Activated CD4-positive, alpha-beta memory T cell treated with anti-CD3 and anti-CD28 coated beads for 36 hours (primary cell): ENCODE measurements at regions of chr19 and their contacts with region 1.

Region 1: GRCh38 chr19:19488875-19489690 is 26.3 kb downstream of the TSSK6 start:
- DNase-seq: peak; percentile 97
- H3K4me3 Mint-ChIP-seq: peak overlapping the region; percentile 57
- H3K27ac Mint-ChIP-seq: peak overlapping the region; percentile 95
- H3K4me1 Mint-ChIP-seq: peaks cover 51% of the 10 kb centered on the region
- H3K27me3 Mint-ChIP-seq: no peaks in the 10 kb centered on the region

Region 2: GRCh38 chr19:19256072-19256969 is 232.8 kb before region 1 on chr19:
- CTCF ChIA-PET with region 1: no interaction called
- POLR2A ChIA-PET with region 1: no interaction called
- intact Hi-C with region 1: no loop called
- DNase-seq: no peak
- H3K4me3 Mint-ChIP-seq: no peak overlapping the region
- H3K27ac Mint-ChIP-seq: no peak overlapping the region
- H3K4me1 Mint-ChIP-seq: peaks cover 6% of the 10 kb centered on the region
- H3K27me3 Mint-ChIP-seq: peaks cover 41% of the 10 kb centered on the region

Region 3: GRCh38 chr19:19320362-19321142 is 168.5 kb before region 1 on chr19 and contains the starts of genes MAU2 and SUGP1:
- CTCF ChIA-PET with region 1: interaction called, 6 read pairs
- POLR2A ChIA-PET with region 1: no interaction called
- intact Hi-C with region 1: loop called (anchors 2 kb)
- DNase-seq: peak; percentile 94
- H3K4me3 Mint-ChIP-seq: peak within 1 kb of the TSS; percentile 94
- H3K27ac Mint-ChIP-seq: peak within 1 kb of the TSS; percentile 96
- H3K4me1 Mint-ChIP-seq: peaks cover 35% of the 10 kb centered on the region
- H3K27me3 Mint-ChIP-seq: no peaks in the 10 kb centered on the region
- total RNA-seq, gene MAU2: 38.6 to 40.9 TPM
- total RNA-seq, gene SUGP1: 39.2 to 44.0 TPM

Region 4: DNA sequence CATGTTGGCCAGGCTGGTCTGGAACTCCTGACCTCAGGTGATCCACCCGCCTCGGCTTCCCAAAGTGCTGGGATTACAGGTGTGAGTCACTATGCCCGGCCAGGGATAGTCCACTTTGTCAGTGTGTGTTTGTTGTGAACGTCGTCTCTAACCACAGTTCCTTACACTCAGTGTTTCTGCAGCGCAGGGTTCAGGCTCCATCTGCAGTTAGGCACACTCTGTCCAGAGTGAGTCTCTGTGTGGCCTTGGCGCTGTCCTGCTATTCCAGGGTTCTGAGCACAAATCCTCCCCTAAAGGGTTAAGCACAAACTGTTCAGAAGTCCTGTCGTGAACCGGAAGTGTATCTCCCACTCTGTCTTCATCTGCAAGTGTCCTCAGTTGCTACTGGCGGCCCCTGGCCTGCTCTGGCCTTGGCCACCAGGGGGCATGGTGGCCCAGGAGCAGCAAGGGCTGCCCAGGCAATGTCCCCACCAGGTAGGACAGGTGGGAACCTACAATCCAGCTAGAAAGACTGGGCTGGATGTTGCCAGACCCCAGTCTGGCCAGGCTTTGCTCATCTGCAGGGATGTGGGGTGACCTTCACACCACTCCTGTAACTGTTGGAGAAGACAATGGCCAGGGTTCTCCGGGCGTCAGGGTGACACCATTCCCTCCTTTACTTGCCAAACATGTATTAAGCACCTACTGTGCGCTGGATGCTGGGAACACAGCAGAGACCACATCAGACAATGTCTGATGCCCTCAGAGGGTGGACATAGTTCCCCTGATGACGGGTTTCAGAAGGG is 122.3 kb before region 1 on chr19:
- CTCF ChIA-PET with region 1: interaction called, 215 read pairs
- POLR2A ChIA-PET with region 1: interaction called, 5 read pairs
- intact Hi-C with region 1: loop called (anchors 1 kb)
- DNase-seq: peak; percentile 84
- H3K4me3 Mint-ChIP-seq: peak overlapping the region; percentile 53
- H3K27ac Mint-ChIP-seq: peak overlapping the region; percentile 52
- H3K4me1 Mint-ChIP-seq: peaks cover 12% of the 10 kb centered on the region
- H3K27me3 Mint-ChIP-seq: no peaks in the 10 kb centered on the region

Region 5: DNA sequence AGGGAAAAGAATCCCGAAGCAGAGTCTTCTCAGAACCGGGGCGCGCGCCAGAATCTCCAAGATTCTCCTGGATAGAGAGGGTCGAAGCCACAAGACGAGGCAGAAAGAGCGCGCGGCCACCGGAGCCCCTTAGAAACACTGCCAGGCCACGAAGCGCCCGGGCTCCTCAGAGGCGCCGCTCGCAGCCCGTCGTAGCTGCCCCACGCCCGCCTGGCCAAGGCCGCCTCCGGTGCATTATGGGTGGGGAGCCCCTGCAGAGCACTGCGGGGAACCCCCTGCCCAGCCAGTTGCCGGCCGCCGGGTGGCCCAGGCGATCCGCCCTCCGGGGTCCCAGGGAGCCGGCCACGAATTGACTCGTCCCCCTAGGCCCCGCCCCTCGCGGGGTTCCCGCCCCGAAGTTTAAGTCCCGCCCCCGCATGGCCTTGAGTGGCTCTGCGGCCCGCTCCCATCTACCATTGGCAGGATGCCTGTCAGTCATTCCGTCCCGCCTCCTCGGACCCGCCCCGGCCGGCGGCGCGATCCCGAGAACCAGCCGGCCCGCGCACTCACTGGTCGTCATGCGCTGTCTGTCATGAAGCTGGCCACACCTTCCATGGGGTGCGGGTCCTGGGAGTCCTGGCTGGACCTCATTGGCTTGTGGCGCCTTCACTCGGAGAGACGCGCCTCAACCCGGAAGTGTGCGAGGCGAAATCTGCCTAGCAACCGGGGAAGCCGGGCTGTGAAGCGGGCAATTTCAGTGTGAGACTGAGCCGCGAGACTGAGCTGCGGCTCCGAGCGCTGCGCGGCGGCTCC is 103.8 kb before region 1 on chr19:
- CTCF ChIA-PET with region 1: interaction called, 8 read pairs
- POLR2A ChIA-PET with region 1: no interaction called
- intact Hi-C with region 1: loop called (anchors 1 kb)
- DNase-seq: peak; percentile 100
- H3K4me3 Mint-ChIP-seq: peak overlapping the region; percentile 80
- H3K27ac Mint-ChIP-seq: peak overlapping the region; percentile 85
- H3K4me1 Mint-ChIP-seq: peaks cover 35% of the 10 kb centered on the region
- H3K27me3 Mint-ChIP-seq: no peaks in the 10 kb centered on the region

Region 6: DNA sequence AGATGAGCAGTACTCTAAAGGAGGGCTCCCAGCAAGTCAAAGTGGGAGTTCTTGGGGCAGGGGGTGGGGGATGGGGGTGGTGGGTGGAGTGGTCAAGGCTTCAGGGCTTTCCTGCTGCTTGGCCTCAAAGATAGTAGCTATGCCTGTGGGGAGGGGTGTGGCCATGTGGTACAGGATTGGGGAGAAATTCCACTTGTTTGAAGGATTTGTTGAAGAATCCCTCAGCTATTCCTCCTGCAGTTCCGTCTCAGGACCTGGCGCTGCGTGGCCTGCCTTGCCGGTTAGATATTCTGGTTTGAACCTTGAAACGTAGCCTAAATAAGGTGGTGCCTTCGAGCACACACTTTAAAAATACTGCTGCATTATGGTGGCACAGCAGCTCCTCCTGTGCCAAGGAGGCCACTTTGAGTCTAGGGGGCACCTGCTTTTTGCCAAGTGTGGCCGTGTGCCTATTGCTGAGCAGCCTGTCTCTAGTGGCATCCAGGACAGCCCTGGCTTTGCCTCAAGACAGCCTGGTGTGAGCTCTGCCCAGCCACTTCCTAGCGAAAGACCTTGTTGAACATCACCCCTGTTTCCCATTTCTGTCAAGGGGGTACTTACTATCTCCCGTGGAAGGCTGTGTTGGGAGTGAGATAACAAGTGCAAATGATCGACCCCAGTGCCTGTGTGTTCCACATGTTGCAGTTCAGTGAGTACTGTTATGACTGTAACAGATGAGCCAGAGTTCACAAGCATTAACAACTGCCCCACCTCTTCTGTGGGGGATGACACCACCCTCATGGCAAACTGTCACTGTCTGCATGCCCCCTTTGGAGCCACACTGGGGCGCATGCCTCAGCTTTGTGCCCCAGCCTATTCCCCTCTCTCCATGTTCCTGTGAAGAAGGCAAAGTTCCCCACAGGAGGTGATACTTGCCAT is 78.5 kb before region 1 on chr19:
- CTCF ChIA-PET with region 1: interaction called, 36 read pairs
- POLR2A ChIA-PET with region 1: interaction called, 23 read pairs
- intact Hi-C with region 1: loop called (anchors 1 kb)
- DNase-seq: peak; percentile 68
- H3K4me3 Mint-ChIP-seq: peak overlapping the region; percentile 12
- H3K27ac Mint-ChIP-seq: peak overlapping the region; percentile 74
- H3K4me1 Mint-ChIP-seq: peaks cover 71% of the 10 kb centered on the region
- H3K27me3 Mint-ChIP-seq: no peaks in the 10 kb centered on the region

Region 7: DNA sequence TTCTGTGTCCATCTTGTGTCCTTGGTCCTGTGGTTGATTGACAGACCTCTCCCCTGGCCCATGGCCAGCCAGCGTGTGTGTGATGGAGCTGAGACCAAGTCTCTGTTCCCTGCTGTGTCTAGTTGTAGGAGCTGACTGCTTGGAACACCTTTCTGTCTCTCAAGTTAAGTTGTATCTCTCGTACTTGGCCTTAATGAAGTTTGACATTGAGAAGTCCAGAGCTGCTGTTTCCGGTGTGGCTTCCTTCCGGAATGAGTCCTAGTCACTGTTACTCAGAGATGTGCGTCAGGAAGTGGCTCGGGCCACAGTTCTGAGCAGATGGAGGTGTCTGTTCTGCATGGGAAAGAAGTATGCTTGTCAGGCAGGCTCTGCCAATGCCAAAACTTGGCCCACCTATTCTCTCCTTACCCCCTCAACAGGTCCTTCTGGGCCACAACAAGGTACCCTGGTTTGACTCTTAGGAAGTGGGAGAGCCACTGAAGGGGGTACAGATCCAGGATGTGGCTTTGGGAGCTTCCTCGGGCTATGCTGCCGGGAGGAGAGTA is 29.3 kb before region 1 on chr19:
- CTCF ChIA-PET with region 1: interaction called, 14 read pairs
- POLR2A ChIA-PET with region 1: no interaction called
- intact Hi-C with region 1: loop called (anchors 1 kb)
- DNase-seq: peak; percentile 86
- H3K4me3 Mint-ChIP-seq: peak overlapping the region; percentile 72
- H3K27ac Mint-ChIP-seq: peak overlapping the region; percentile 93
- H3K4me1 Mint-ChIP-seq: peaks cover 79% of the 10 kb centered on the region
- H3K27me3 Mint-ChIP-seq: no peaks in the 10 kb centered on the region

Region 8: GRCh38 chr19:19515764-19516519 is 26.9 kb after region 1 on chr19 and contains the start of gene NDUFA13:
- CTCF ChIA-PET with region 1: interaction called, 9 read pairs
- POLR2A ChIA-PET with region 1: interaction called, 4 read pairs
- intact Hi-C with region 1: loop called (anchors 2 kb)
- DNase-seq: peak; percentile 97
- H3K4me3 Mint-ChIP-seq: peak within 1 kb of the TSS; percentile 94
- H3K27ac Mint-ChIP-seq: peak within 1 kb of the TSS; percentile 94
- H3K4me1 Mint-ChIP-seq: peaks cover 28% of the 10 kb centered on the region
- H3K27me3 Mint-ChIP-seq: no peaks in the 10 kb centered on the region
- total RNA-seq, gene NDUFA13: 365 to 374 TPM